Left ventricle myocardium superior (tissue), 1 donor: ENCODE measurements at regions of chr3 and their contacts with region 1.

Region 1: GRCh38 chr3:16290007-16290826 is 25.2 kb downstream of the OXNAD1 start:
- DNase-seq: no peak
- ATAC-seq: no peak

Region 2: DNA sequence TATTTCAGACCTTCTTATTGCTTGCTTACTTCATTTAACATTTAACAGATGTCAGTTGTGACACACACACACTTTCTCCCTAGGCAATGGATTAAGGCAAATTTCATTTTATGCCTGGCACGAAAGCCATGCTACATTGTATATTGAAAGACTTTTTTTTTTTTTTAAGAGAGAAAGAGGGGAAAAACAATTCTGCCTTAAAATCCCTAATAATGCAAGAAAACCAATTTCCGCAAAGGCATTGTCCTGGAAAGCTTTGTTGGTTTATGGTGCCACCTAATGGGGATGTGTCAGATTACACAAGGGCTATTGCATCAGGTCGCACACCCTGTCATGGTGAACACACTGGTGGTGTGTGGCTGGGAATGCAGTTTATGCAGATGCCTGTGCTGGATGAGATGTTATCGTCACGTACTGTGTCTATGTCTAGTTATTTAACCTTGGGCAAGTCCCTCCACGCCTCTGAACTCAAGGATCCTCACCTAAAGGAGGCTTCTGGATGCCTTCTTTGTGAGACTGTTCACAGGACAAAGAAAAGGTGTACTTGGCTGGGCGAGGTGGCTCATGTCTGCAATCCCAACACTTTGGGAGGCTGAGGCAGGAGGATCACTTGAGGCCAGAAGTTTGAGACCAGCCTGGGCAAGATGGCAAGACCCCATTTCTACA is 260.6 kb after region 1 on chr3:
- intact Hi-C with region 1: loop called (anchors 5 kb)
- DNase-seq: no peak
- ATAC-seq: peak; percentile 78

Region 3: GRCh38 chr3:16665282-16665741 is 375.1 kb after region 1 on chr3:
- intact Hi-C with region 1: no loop called
- DNase-seq: no peak
- ATAC-seq: peak; percentile 41